Ovary (tissue), 10 donors: ENCODE measurements at regions of chr10 and their contacts with region 1.

Region 1: GRCh38 chr10:130606001-130606405 is 469.8 kb downstream of the GLRX3 start:
- DNase-seq: no peak
- H3K4me3 ChIP-seq: no peak overlapping the region
- H3K27ac ChIP-seq: no peak overlapping the region
- H3K4me1 ChIP-seq: no peaks in the 10 kb centered on the region
- H3K27me3 ChIP-seq: no peaks in the 10 kb centered on the region
- CTCF ChIP-seq: no peak
- EP300 ChIP-seq: no peak
- POLR2A ChIP-seq: no peak

Region 2: GRCh38 chr10:130403153-130404075 is 202.6 kb before region 1 on chr10:
- intact Hi-C with region 1: no loop called
- DNase-seq: no peak
- H3K4me3 ChIP-seq: no peak overlapping the region
- H3K27ac ChIP-seq: no peak overlapping the region
- H3K4me1 ChIP-seq: no peaks in the 10 kb centered on the region
- H3K27me3 ChIP-seq: no peaks in the 10 kb centered on the region
- CTCF ChIP-seq: no peak
- EP300 ChIP-seq: no peak
- POLR2A ChIP-seq: no peak

Region 3: DNA sequence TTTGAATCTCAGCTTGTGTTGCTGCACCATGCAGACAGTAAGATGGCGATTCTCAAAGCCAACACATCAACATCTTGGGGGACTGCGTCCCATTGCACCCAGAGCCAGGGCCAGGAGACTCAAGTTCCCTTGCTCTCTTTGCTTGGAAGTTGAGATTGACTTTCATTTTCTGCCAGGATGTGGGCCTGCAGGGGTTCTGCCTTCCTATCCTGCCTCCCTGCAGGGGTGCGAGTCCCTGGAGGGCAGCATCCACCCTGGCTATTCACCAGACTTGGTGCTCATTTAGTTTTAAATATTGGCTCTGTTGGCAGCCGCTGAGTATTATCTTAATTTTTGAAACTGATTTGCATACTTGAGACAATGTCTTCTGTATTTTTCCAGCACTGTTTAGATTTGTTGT is 18.3 kb before region 1 on chr10:
- intact Hi-C with region 1: loop called in 1 of 4 experiments (anchors 2 kb)
- DNase-seq: no peak
- H3K4me3 ChIP-seq: no peak overlapping the region
- H3K27ac ChIP-seq: no peak overlapping the region
- H3K4me1 ChIP-seq: no peaks in the 10 kb centered on the region
- H3K27me3 ChIP-seq: no peaks in the 10 kb centered on the region
- CTCF ChIP-seq: no peak
- EP300 ChIP-seq: no peak
- POLR2A ChIP-seq: no peak